ENCODE measurements at regions of chr5 and their contacts with region 1.

Region 1: GRCh38 chr5:142079306-142079721 is 29.3 kb upstream of the NDFIP1 start:
- DNase-seq: no peak
- ATAC-seq: no peak
- H3K4me3 ChIP-seq: no peak overlapping the region
- H3K27ac ChIP-seq: no peak overlapping the region
- H3K4me1 ChIP-seq: no peaks in the 10 kb centered on the region
- H3K27me3 ChIP-seq: peaks cover under 1% of the 10 kb centered on the region; the same call in 1 of the 2 replicates
- CTCF ChIP-seq: no peak

Region 2: GRCh38 chr5:140855772-140856674 is 1223.3 kb before region 1 on chr5 and contains the start of gene PCDHA10:
- CTCF ChIA-PET with region 1: no interaction called
- POLR2A ChIA-PET with region 1: no interaction called
- in situ Hi-C with region 1: no loop called
- intact Hi-C with region 1: no loop called
- DNase-seq: no peak
- ATAC-seq: no peak
- H3K4me3 ChIP-seq: no peak within 1 kb of the TSS
- H3K27ac ChIP-seq: no peak within 1 kb of the TSS
- H3K4me1 ChIP-seq: no peaks in the 10 kb centered on the region
- H3K27me3 ChIP-seq: no peaks in the 10 kb centered on the region
- CTCF ChIP-seq: peak; percentile 22; the same call in 1 of the 2 replicates
- total RNA-seq, gene PCDHA10: 0.33 TPM

Region 3: GRCh38 chr5:141387233-141387949 is 691.9 kb before region 1 on chr5 and contains the start of gene PCDHGB4:
- CTCF ChIA-PET with region 1: interaction called, 10 read pairs
- POLR2A ChIA-PET with region 1: no interaction called
- in situ Hi-C with region 1: no loop called
- intact Hi-C with region 1: no loop called
- DNase-seq: no peak
- ATAC-seq: no peak
- H3K4me3 ChIP-seq: no peak within 1 kb of the TSS
- H3K27ac ChIP-seq: no peak within 1 kb of the TSS
- H3K4me1 ChIP-seq: no peaks in the 10 kb centered on the region
- H3K27me3 ChIP-seq: no peaks in the 10 kb centered on the region
- CTCF ChIP-seq: no peak
- total RNA-seq, gene PCDHGB4: 0.21 TPM

Region 4: GRCh38 chr5:142024771-142025304 is 54.5 kb before region 1 on chr5:
- CTCF ChIA-PET with region 1: no interaction called
- POLR2A ChIA-PET with region 1: interaction called, 10 read pairs
- in situ Hi-C with region 1: no loop called
- intact Hi-C with region 1: no loop called
- DNase-seq: peak; percentile 85
- ATAC-seq: peak; percentile 100
- H3K4me3 ChIP-seq: peak overlapping the region; percentile 52 to 68
- H3K27ac ChIP-seq: peak overlapping the region; percentile 89
- H3K4me1 ChIP-seq: peaks cover 3% of the 10 kb centered on the region; the same call in 1 of the 2 replicates
- H3K27me3 ChIP-seq: no peaks in the 10 kb centered on the region
- CTCF ChIP-seq: no peak

Region 5: DNA sequence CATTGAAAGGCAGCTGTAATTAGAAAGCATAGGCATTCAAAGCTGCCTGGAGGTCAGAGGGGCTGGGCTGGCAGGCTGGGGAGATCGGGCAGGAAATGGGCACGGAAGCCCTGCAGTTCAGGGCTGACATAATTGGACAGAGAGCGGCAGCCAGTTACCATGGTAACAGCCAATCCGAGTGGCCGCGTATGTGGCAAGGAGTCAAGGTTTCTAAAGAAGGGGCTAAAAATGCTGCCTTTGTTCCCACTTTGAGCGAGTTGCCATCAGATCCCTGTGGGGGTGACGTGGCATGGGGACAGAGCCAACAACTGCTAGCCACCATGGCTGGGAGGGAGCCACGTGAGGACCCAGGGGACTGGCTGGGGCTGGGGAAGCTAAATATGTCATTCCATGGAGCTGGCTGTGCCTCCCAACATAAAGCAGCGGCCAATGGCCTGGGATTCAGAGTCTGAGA is 15.4 kb before region 1 on chr5:
- CTCF ChIA-PET with region 1: no interaction called
- POLR2A ChIA-PET with region 1: no interaction called
- in situ Hi-C with region 1: no loop called
- intact Hi-C with region 1: no loop called
- DNase-seq: no peak
- ATAC-seq: peak; percentile 73; the same call in 1 of the 2 replicates
- H3K4me3 ChIP-seq: no peak overlapping the region
- H3K27ac ChIP-seq: no peak overlapping the region
- H3K4me1 ChIP-seq: no peaks in the 10 kb centered on the region
- H3K27me3 ChIP-seq: 0 out of 2 replicates have a peak, but pooled peaks cover 3% of the 10 kb centered on the region
- CTCF ChIP-seq: no peak